Posterior vena cava (tissue), 2 donors: ENCODE measurements at regions of chr7 and their contacts with region 1.

Region 1: DNA sequence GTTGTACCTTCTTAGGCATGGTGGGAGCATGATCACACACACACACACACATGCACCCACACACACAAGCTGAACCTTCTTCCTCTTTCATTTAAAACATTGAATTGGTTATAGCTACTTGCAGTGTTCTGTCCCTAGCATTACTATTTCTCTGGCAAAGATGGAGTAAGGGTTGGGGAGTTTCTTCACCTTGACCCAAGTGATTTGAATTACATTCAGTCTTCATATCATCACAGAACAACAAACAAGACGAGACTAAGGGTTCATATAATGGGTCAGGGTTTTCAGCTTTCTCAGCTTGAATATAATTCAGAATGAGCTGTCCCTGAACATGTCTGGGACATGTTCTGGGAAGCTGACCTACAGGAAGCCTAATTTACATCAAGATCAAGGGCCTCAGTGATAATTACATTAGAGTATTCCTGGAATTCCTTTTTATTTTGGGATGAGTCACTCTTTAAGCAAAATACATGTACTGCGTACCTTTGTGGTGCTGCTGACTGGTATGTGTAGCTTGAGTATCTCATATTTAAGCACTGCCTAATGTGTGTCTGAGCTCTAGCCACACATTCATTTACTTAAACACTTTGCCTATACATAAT is 213.5 kb upstream of the TMEM229A start:
- DNase-seq: no peak

Region 2: GRCh38 chr7:124310934-124311390 is 64.6 kb after region 1 on chr7:
- intact Hi-C with region 1: loop called in 1 of 2 experiments (anchors 5 kb)
- DNase-seq: no peak

Region 3: GRCh38 chr7:124351950-124352349 is 105.6 kb after region 1 on chr7:
- intact Hi-C with region 1: no loop called
- DNase-seq: no peak